GM23248 (cell line): ENCODE measurements at regions of chr15 and their contacts with region 1.

Region 1: GRCh38 chr15:79981831-79982455 is 10.9 kb upstream of the BCL2A1 start:
- DNase-seq: no peak
- H3K4me3 ChIP-seq: no peak overlapping the region
- H3K27ac ChIP-seq: no peak overlapping the region
- H3K4me1 ChIP-seq: peaks cover 13% of the 10 kb centered on the region
- H3K27me3 ChIP-seq: no peaks in the 10 kb centered on the region

Region 2: GRCh38 chr15:79339564-79340314 is 642.2 kb before region 1 on chr15:
- in situ Hi-C with region 1: loop called (anchors 10 kb)
- DNase-seq: peak; percentile 65
- H3K4me3 ChIP-seq: no peak overlapping the region
- H3K27ac ChIP-seq: no peak overlapping the region
- H3K4me1 ChIP-seq: no peaks in the 10 kb centered on the region
- H3K27me3 ChIP-seq: no peaks in the 10 kb centered on the region

Region 3: DNA sequence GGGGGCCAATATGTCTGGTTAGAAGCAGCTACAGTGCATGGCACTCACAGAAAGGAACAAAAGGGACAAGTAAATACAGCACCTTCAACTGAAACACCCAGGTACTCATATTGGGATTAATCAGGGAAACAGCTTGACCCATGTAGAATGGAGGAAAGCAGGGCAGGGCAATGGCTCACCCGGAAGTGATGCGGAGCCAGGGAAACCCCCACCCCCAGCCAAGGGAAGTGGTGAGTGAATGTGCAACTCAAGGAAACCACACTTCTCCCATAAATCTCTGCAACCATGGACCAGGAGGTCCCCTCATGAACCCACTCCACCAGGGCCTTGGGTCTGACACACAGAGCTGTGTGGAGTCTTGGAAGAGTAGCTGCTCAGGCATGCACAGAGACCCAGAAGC is 202.2 kb before region 1 on chr15:
- in situ Hi-C with region 1: no loop called
- DNase-seq: no peak
- H3K4me3 ChIP-seq: no peak overlapping the region
- H3K27ac ChIP-seq: no peak overlapping the region
- H3K4me1 ChIP-seq: no peaks in the 10 kb centered on the region
- H3K27me3 ChIP-seq: no peaks in the 10 kb centered on the region

Region 4: DNA sequence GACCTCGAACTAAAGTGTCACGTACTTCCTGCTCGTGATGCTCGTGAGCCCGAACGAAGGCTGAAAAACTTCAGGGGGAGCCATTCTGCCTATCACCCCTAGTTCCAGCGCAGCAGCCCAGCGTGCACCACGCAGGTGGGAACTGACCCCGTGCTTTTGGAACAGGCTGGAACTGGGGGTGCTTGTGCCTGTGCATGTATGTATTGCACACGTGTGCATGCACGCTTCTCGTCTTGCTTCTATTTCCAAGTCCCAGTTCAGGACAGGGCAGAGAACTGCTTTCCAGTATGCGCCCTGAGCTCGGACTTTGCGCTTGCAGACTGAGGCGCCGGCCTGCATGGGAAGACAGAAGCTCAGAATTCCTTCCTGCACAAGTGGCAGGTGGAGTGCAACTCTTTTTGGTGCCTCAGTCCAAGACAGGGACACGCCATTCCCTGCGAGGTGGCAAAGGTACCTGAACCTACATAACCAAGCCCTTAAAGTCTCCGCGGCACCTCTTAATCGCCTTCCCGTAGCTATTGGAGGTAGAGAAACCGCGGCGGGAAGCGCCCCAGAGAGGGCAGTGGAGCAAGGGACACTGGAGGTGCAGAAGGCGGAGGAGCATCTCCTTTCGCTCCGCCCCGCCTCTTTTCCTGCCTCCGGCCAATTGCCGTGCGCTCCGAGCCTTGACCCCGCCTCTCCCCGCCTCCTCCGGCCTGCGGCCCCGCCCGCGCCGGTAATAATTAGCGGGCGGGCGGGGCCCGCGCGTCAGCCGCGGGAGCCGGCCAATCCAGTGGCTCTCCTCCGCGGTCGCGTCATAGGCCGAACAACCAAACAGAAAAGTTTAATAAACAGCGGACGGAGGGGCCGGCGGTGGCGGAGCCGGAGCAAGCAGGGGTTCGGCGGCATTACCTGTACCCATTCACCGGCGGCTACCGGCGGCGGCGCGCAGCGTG is 77.2 kb after region 1 on chr15 and contains the start of gene ZFAND6:
- in situ Hi-C with region 1: no loop called
- DNase-seq: peak; percentile 99
- H3K4me3 ChIP-seq: peak within 1 kb of the TSS; percentile 80
- H3K27ac ChIP-seq: peak within 1 kb of the TSS; percentile 89
- H3K4me1 ChIP-seq: peaks cover 18% of the 10 kb centered on the region
- H3K27me3 ChIP-seq: no peaks in the 10 kb centered on the region
- total RNA-seq, gene ZFAND6: 101 and 130 TPM in 2 replicates